Thyroid gland (tissue), 4 donors: ENCODE measurements at regions of chr15 and their contacts with region 1.

Region 1: GRCh38 chr15:68559345-68560310 is 19.2 kb upstream of the CORO2B start:
- DNase-seq: peak; percentile 78 to 83
- H3K4me3 ChIP-seq: peak overlapping the region in 2 of 3 donors; percentile 5 to 20
- H3K27ac ChIP-seq: no peak overlapping the region
- H3K4me1 ChIP-seq: peaks cover 4% of the 10 kb centered on the region in 2 donors
- H3K27me3 ChIP-seq: no peaks in the 10 kb centered on the region
- CTCF ChIP-seq: peak; percentile 85 to 98 (median 96)
- POLR2A ChIP-seq: no peak

Region 2: DNA sequence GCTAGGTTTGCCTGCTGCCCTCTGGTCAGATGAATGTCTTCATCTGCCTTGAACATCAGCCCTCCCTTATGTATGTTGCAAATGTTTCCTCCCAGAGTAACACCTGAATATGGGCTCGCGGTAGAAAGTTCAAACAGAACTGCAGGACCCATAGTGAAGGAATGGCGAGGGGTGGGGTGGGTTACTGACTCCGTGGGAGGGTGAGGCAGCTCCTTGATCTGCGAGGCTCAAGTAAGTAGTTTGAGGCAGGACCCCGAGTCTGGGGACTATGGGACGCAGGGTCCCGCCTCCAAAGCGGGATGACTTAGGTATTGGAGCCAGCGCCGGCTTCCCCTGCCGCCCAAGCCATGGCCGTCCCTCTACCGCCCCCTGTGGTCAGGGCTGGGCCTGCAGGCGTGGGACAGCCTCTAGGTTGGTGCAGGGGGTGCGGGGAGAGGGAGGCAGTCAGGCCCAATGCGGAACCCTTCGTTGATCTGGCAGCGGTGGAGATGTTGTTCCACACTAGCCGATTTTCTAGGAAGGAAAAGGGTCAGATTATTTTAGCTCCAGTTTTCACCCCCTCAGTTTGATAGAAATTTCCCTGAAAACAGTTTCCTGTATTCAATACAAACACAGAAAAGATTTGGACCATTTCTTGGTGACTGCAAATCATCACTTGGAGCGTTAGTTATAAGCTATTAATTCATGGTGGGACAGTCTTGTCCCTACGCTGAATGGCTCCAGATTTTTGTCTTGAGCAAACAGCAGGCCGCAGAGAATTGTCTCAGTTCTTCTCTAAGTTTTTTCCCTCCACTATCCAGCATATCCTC is 91.5 kb after region 1 on chr15:
- intact Hi-C with region 1: loop called (anchors 5 kb)
- DNase-seq: peak; percentile 62 to 69
- H3K4me3 ChIP-seq: no peak overlapping the region
- H3K27ac ChIP-seq: no peak overlapping the region
- H3K4me1 ChIP-seq: peaks cover 10 to 13% of the 10 kb centered on the region in 2 donors
- H3K27me3 ChIP-seq: no peaks in the 10 kb centered on the region
- CTCF ChIP-seq: peak; percentile 27 to 82 (median 58)
- POLR2A ChIP-seq: no peak

Region 3: GRCh38 chr15:69045808-69046207 is 486.2 kb after region 1 on chr15:
- intact Hi-C with region 1: no loop called
- DNase-seq: no peak
- H3K4me3 ChIP-seq: no peak overlapping the region
- H3K27ac ChIP-seq: no peak overlapping the region
- H3K4me1 ChIP-seq: no peaks in the 10 kb centered on the region
- H3K27me3 ChIP-seq: no peaks in the 10 kb centered on the region
- CTCF ChIP-seq: no peak
- POLR2A ChIP-seq: no peak